Activated CD4-positive, alpha-beta memory T cell treated with anti-CD3 and anti-CD28 coated beads for 36 hours (primary cell): ENCODE measurements at regions of chr17 and their contacts with region 1.

Region 1: GRCh38 chr17:81094509-81095382 is 59.8 kb downstream of the BAIAP2 start:
- DNase-seq: peak; percentile 97
- H3K4me3 Mint-ChIP-seq: no peak overlapping the region
- H3K27ac Mint-ChIP-seq: peak overlapping the region; percentile 75
- H3K4me1 Mint-ChIP-seq: peaks cover 46% of the 10 kb centered on the region
- H3K27me3 Mint-ChIP-seq: no peaks in the 10 kb centered on the region

Region 2: GRCh38 chr17:81025741-81026129 is 69.0 kb before region 1 on chr17:
- CTCF ChIA-PET with region 1: interaction called, 27 read pairs
- POLR2A ChIA-PET with region 1: interaction called, 3 read pairs
- intact Hi-C with region 1: loop called (anchors 1 kb)
- DNase-seq: no peak
- H3K4me3 Mint-ChIP-seq: no peak overlapping the region
- H3K27ac Mint-ChIP-seq: no peak overlapping the region
- H3K4me1 Mint-ChIP-seq: peaks cover 8% of the 10 kb centered on the region
- H3K27me3 Mint-ChIP-seq: peaks cover 19% of the 10 kb centered on the region

Region 3: DNA sequence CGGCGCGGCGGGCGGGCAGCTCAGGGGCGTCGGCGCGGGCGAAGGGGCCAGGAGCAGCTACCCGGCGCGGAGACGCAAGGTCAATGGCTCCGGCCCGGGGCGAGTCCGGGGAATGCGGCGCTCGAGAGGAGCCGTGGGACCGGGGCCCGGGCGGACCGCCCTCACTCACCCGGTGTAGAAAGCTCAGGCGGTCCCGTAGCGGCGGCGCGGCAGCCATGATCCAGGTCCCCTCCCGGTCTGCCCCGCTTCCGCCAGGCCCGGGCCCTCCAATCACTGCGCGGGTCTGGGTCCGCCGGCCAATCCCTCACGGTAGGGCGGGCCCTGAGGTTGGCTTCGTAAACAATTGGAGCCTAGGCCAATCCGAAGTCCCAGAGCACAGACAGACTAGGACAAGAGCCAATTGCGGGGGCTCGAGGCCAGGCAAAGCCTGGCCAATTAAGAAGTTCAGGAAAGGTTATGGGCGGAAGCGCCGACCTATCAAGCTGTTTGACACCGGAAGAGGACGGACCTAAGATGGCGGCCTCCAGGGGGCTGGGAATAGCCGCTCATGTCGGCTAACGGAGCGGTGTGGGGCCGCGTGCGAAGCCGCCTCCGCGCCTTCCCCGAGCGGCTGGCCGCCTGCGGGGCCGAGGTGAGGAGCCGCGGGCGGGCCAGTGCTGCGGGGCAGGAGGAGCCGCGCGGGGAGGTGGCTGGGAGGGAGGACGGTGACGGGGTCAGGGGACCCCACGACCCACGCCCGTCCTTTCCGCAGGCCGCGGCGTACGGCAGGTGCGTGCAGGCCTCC is 144.3 kb after region 1 on chr17 and contains the starts of genes NDUFAF8 and TEPSIN:
- CTCF ChIA-PET with region 1: no interaction called
- POLR2A ChIA-PET with region 1: no interaction called
- intact Hi-C with region 1: no loop called
- DNase-seq: peak; percentile 98
- H3K4me3 Mint-ChIP-seq: peak within 1 kb of the TSS; percentile 96
- H3K27ac Mint-ChIP-seq: peak within 1 kb of the TSS; percentile 92
- H3K4me1 Mint-ChIP-seq: peaks cover 28% of the 10 kb centered on the region
- H3K27me3 Mint-ChIP-seq: no peaks in the 10 kb centered on the region
- total RNA-seq, gene NDUFAF8: 49.8 to 55.9 TPM
- total RNA-seq, gene TEPSIN: 20.0 to 24.6 TPM